HCT116 (cell line): ENCODE measurements at regions of chr5 and their contacts with region 1.

Region 1: GRCh38 chr5:91280362-91281269 is 102.5 kb downstream of the ARRDC3 start:
- DNase-seq: peak; percentile 92
- ATAC-seq: peak; percentile 88
- H3K4me3 ChIP-seq: peak overlapping the region; percentile 40 to 53
- H3K27ac ChIP-seq: peak overlapping the region; percentile 84
- H3K4me1 ChIP-seq: peaks cover 28 to 74% of the 10 kb centered on the region in 2 experiments
- H3K27me3 ChIP-seq: no peaks in the 10 kb centered on the region
- CTCF ChIP-seq: no peak
- POLR2A ChIP-seq: no peak
- RAD21 ChIP-seq: no peak

Region 2: GRCh38 chr5:89421035-89421434 is 1859.6 kb before region 1 on chr5:
- CTCF ChIA-PET with region 1: no interaction called
- POLR2A ChIA-PET with region 1: no interaction called
- RAD21 ChIA-PET with region 1: no interaction called
- intact Hi-C with region 1: no loop called
- DNase-seq: no peak
- ATAC-seq: no peak; the same call in 1 of the 2 replicates
- H3K4me3 ChIP-seq: no peak overlapping the region
- H3K27ac ChIP-seq: no peak overlapping the region; the same call in 1 of the 2 replicates
- H3K4me1 ChIP-seq: peaks cover 11% of the 10 kb centered on the region in 2 experiments
- H3K27me3 ChIP-seq: no peaks in the 10 kb centered on the region
- CTCF ChIP-seq: no peak
- POLR2A ChIP-seq: no peak
- RAD21 ChIP-seq: no peak

Region 3: DNA sequence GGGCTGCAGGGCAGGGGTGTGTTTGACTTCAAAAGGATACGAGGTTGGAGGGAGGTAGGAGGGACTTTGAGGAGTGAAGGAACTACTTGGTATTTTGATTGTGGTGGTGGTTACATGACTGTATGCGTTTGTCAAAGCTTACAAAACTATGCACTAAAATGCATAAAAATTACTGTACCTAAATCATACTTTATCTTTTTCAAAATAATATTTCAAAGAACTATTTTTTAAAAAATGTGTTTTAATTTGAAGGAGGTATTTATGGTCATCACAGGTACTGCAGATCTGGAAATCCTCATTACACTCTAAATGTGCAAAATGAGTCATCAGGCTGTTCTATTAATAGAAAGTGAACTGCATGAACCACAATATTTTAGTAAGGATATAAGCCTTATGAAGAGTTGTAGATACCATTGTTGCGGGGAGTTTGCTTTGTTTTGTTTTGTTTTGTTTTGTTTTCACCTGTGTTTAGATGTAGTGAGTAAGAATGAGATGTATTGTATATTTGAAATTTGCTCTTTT is 14.4 kb before region 1 on chr5:
- CTCF ChIA-PET with region 1: no interaction called
- POLR2A ChIA-PET with region 1: interaction called, 6 read pairs
- RAD21 ChIA-PET with region 1: no interaction called
- intact Hi-C with region 1: loop called (anchors 1 kb)
- DNase-seq: peak; percentile 46
- ATAC-seq: peak; percentile 78
- H3K4me3 ChIP-seq: peak overlapping the region in 1 of 2 experiments; percentile 36; a peak in 1 of 4 replicates
- H3K27ac ChIP-seq: peak overlapping the region; percentile 54; the same call in 1 of the 2 replicates
- H3K4me1 ChIP-seq: peaks cover 20 to 34% of the 10 kb centered on the region in 2 experiments
- H3K27me3 ChIP-seq: no peaks in the 10 kb centered on the region
- CTCF ChIP-seq: peak in 1 of 3 experiments; percentile 27; a peak in 1 of 6 replicates
- POLR2A ChIP-seq: no peak
- RAD21 ChIP-seq: peak; percentile 10; the same call in 1 of the 2 replicates